Posterior cingulate gyrus (tissue), 11 donors: ENCODE measurements at regions of chr14 and their contacts with region 1.

Region 1: DNA sequence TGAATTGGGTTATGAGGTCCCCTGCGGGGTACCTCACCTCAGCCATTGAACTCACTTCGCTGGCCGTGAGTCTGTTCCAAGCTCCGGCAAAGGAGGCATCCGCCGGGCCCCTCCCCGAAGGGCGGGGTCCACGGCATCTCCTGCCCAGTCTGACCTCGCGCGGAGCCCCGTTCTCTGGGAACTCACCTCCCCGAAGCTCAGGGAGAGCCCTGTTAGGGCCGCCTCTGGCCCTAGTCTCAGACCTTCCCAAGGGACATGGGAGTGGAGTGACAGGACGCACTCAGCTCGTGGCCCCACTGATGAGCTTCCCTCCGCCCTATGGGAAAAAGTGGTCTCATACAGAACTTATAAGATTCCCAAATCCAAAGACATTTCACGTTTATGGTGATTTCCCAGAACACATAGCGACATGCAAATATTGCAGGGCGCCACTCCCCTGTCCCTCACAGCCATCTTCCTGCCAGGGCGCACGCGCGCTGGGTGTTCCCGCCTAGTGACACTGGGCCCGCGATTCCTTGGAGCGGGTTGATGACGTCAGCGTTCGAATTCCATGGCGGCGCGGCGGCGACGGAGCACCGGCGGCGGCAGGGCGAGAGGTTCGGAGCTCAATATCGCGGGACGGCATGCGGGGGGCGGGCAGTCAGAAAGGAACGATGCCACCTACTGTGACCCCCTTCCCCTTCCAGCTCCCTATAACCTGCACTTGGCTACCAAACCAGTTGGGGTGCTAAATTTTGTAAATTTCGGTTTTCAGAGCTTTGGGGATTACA is at the start of gene PARP2:
- DNase-seq: peak; percentile 95 to 100 (median 96)

Region 2: DNA sequence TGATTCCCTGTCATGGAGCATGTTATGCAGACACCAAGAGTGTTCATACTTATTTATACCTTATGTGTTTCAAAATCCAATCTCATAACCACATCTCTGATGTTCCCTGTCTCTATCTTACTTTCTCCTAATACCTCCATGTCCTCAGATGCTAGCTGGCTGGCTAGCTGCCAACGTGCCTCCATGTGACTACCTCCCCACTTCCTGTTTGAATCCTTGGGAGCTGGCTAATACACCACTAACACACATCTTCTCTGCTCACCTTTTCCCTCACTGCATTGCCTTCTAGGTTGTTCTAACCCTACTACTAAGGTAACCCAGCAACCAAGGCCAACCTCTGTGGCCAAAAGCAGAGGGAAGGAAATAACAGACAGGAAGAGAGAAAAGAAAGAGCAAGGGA is 64.9 kb before region 1 on chr14:
- intact Hi-C with region 1: no loop called
- DNase-seq: no peak

Region 3: GRCh38 chr14:20327005-20327869 is 16.0 kb before region 1 on chr14:
- intact Hi-C with region 1: loop called (anchors 2 kb)
- DNase-seq: no peak

Region 4: GRCh38 chr14:20413045-20413799 is 69.9 kb after region 1 on chr14 and contains the start of gene TEP1:
- intact Hi-C with region 1: loop called (anchors 5 kb)
- DNase-seq: peak; percentile 63 to 96 (median 80)

Region 5: DNA sequence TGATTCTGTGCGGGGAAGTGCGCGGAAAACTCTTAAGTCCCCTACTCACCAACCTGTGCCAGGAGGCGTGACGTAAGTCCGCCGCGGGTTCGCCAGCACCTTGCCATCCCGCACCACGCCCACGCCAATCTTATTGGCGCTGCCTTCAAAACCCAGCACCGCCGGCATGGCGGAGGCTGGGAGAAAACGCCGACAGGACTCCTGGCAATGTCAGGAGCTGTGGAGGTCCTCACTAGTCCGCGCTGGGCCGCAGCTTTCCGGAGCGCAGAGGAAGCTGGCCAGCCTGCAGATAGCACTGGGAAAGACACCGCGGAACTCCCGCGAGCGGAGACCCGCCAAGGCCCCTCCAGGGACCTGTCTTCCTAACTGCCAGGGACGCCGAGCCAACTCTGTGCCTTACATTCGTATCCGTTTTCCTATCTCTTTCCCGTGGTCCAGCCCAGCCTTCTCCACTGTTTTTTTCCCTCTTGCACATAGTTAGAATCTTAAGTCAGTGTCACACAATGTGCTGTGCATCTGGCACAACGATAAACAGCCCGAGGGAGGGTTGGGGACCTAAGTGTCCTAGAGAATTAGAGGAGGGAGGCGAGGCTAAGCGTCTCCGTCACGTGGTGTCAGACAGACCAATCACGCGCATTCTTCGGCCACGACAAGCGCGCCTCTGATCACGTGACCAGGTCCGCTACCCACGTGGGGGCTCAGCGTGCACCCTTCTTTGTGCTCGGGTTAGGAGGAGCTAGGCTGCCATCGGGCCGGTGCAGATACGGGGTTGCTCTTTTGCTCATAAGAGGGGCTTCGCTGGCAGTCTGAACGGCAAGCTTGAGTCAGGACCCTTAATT is 111.5 kb after region 1 on chr14 and contains the starts of genes APEX1 and OSGEP:
- intact Hi-C with region 1: loop called (anchors 5 kb)
- DNase-seq: peak; percentile 97 to 100 (median 99)

Region 6: DNA sequence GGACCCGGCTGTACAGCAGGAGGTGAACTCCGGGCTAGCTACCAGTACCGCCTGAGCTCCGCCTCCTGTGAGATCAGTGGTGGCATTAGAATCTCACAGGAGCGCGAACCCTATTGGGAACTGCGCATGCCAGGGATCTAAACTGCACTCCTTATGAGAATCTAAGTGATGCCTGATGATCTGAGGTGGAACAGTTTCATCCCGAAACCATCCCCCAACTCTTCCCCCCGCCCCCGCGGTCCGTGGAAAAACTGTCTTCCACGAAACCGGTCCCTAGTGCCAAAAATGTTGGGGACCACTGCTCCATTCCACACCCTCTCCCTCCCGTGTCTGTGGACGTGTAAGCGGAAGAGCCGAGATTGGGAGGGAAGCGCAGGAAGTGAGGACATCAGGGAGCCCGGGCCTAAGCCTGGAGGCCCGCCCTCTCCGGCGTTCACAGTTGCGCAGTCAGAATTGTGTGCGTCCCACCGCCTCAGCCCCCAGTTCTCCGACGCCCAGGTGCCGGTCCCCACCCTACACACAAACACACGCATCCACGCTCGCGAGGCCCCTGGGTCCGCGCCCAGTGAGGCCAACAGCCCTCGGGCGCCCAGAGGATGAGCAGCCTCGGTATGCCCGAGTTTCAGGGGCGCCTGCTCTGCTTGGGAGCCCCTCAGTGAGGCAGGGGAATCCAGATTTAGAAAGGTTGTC is 339.3 kb after region 1 on chr14:
- intact Hi-C with region 1: loop called (anchors 5 kb)
- DNase-seq: peak; percentile 84 to 98 (median 89)